Activated B cell treated with CpG ODN at 0.5 μM for 24 hours (primary cell): ENCODE measurements at regions of chr7 and their contacts with region 1.

Region 1: DNA sequence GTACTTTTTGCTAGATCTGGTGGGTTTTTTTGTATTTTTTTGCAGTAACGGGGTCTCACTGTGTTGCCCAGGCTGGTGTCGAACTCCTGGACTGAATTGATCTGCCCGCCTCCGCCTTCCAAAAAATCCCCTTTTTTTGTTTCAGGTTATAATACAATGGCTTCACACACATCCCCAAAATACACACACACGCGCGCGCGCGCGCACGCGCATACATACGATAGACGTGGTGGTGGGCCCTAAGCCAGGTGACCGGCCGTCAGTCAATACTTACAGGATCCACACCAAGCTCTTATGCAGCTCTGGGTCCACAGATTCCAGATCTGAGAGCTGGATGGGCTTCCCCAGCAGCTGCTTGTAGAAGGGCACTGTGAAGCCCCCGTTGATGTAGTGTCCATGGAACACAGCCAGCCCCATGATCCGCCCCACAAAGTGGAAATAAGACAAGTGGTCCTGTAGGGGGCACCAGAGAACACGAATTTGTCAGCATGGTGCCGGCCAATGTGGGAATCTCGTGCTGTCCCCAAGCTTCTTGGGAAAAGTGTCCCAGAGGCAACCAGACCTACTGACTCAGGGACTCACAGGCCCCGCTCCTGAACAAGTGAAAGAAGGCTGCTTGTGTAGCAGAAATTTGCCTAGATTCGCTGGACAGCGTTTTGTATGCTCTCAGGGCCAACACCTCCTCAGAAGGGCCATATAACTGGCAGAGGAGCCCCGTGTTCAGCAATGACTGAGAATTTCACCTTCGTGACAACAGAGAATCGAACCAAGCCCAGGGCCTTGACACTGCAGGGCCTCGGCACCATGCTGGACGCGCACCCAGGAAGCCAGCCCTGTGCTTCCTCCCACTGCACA is 103.6 kb downstream of the SMURF1 start:
- DNase-seq: no peak
- ATAC-seq: peak; percentile 65
- H3K4me3 Mint-ChIP-seq: no peak overlapping the region
- H3K27ac Mint-ChIP-seq: no peak overlapping the region
- H3K4me1 Mint-ChIP-seq: no peaks in the 10 kb centered on the region
- H3K27me3 Mint-ChIP-seq: no peaks in the 10 kb centered on the region
- CTCF ChIP-seq: peak; percentile 44

Region 2: DNA sequence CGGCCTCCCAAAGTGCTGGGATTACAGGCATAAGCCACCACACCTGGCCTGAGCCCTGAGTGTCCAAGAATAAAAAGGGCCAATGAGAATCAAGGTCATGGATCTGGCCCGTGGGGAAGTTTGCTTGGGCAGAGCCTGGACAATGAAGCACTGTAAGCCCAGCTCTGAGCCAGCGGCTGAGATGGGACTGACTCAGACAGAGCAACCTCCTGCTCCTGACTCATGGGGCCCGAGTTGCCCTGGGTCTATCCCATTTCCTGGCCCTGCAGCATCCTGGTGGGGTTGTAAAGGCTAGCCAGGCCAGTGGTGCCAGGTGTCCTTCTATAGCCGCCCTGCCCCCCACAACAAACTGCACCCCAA is 227.1 kb after region 1 on chr7:
- CTCF ChIA-PET with region 1: no interaction called
- POLR2A ChIA-PET with region 1: interaction called, 10 read pairs
- intact Hi-C with region 1: no loop called
- DNase-seq: no peak
- ATAC-seq: no peak
- H3K4me3 Mint-ChIP-seq: no peak overlapping the region
- H3K27ac Mint-ChIP-seq: no peak overlapping the region
- H3K4me1 Mint-ChIP-seq: no peaks in the 10 kb centered on the region
- H3K27me3 Mint-ChIP-seq: peaks cover 7% of the 10 kb centered on the region
- CTCF ChIP-seq: no peak

Region 3: DNA sequence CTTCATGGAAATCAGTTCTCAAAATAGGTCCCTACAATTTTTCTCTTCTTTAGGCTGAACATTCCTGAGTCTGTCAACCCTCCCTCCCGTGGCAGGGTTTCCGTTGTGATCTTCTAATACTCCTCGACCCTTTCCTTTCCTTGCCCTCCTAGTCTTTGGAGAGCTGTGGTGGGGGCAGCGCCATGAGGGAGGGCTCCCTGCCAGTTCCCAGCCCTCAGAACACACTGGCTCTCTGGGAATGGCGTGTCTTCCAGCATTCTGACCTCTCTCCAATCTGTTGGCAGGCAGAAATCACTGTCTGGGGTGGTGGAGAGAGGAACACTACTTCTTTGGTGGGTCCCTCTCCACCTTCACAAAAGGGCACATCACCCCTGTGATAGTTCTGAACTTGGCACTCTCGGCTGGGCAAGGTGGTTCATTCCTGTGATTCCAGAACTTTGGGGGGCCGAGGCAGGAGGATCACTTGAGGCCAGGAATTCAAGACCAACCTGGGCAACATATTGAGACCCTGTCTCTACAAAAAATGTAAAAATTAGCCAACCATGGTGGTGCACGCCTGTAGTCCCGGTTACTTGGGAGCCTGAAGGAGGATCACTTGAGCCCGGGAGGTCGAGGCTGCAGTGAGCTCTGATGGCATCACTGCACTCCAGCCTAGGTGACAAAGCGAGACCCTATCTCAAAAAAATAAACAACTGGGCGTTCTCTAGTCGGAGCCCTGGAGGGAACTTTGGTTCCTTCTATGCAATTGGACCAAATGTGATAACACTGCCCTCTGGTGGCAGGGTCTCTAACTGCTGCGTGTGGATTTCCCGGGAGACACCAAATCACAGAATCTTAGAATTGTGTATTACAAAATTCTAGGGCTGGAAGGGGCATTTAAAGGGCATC is 272.2 kb after region 1 on chr7:
- CTCF ChIA-PET with region 1: interaction called, 42 read pairs
- POLR2A ChIA-PET with region 1: no interaction called
- intact Hi-C with region 1: loop called (anchors 1 kb)
- DNase-seq: peak; percentile 53
- ATAC-seq: peak; percentile 71
- H3K4me3 Mint-ChIP-seq: no peak overlapping the region
- H3K27ac Mint-ChIP-seq: no peak overlapping the region
- H3K4me1 Mint-ChIP-seq: peaks cover 2% of the 10 kb centered on the region
- H3K27me3 Mint-ChIP-seq: peaks cover 3% of the 10 kb centered on the region
- CTCF ChIP-seq: peak; percentile 25